ENCODE measurements at regions of chr3 and their contacts with region 1.

Region 1: DNA sequence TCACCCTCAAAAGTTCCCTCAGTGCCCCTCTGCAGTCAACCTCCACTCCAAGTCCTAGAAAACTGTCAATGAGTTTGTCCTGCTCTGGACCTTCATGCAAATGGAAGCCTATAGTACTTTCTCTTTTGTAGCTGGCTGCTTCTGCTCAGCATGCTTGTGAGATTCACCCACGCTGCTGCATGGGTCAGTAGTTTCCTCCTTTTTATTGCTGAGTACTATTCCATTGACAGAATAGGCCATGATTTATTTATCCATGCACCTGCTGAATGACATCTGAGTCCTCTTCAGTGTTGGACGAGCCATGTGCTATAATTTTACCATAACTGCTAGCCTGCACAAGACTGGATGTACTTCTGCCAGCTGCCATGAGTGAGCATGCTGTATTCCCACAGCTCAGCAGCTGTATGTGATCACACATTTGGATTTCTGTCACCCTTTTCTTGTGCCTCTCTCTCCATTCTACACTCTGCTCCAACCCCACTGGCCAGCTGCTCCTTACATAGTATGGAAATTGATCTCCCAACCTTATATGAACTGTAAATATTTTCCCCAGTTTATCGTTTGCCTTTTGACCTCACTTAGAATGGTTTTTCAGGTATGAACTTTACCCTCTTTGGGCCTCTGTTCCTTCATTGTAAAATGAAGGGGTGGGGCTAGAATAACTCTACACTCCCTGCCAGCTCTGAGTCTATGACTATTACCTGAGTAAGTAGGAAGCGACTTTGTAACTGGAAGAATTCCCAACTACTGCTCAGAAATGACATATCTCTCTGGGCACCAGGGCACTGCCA is 26.2 kb downstream of the CDCP1 start:
- DNase-seq: no peak
- H3K4me3 ChIP-seq: no peak overlapping the region
- H3K27ac ChIP-seq: no peak overlapping the region
- H3K4me1 ChIP-seq: peaks cover 14 to 21% (median 19%) of the 10 kb centered on the region in 4 donors
- H3K27me3 ChIP-seq: no peaks in the 10 kb centered on the region
- CTCF ChIP-seq: no peak
- EP300 ChIP-seq: no peak
- POLR2A ChIP-seq: no peak

Region 2: GRCh38 chr3:45055411-45056143 is 64.4 kb before region 1 on chr3:
- intact Hi-C with region 1: loop called (anchors 5 kb)
- DNase-seq: no peak
- H3K4me3 ChIP-seq: no peak overlapping the region
- H3K27ac ChIP-seq: peak overlapping the region; percentile 69 to 85 (median 80)
- H3K4me1 ChIP-seq: peaks cover 20 to 64% (median 54%) of the 10 kb centered on the region in 4 donors
- H3K27me3 ChIP-seq: no peaks in the 10 kb centered on the region
- CTCF ChIP-seq: peak in 1 of 3 experiments; percentile 16
- EP300 ChIP-seq: no peak
- POLR2A ChIP-seq: no peak